SK-N-SH (cell line): ENCODE measurements at regions of chr2 and their contacts with region 1.

Region 1: DNA sequence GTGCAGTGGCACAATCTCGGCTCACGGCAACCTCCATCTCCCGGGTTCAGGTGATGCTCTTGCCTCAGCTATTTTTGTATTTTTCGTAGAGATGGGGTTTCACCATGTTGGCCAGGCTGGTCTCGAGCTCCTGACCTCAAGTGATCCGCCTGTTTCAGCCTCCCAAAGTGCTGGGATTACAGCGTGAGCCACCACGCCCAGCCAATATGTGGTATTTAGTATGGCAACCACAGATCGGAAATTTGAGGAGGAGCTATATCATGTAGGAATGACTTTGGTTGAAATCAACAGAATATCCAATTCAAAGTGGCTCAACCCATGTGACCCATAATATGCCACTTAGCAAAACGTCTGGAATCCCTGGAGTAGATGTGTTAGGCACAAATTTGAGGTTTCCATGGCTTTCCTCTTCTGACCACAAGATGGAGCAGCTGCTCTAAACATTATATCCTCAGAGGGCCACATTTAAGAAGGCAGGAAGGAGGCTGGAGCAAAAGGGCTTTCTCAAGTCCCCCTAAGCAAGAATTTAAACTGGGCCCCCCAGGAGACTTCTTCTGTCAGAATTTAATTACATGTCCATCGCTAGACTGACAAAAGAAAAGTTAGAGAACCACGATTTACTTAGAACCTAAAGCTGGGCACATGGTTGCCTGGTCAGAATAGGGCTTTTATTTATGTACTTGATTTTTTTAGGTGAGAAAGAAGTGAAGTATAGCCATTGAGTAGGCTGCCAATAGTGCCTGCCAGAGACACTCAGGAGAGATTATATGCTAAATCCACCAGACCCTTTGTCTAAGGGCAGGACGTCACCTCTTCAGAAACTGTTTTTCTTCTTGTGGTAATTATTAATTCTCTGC is 49.6 kb upstream of the ITSN2 start:
- DNase-seq: peak; percentile 83
- H3K4me3 ChIP-seq: no peak overlapping the region
- H3K27ac ChIP-seq: no peak overlapping the region
- H3K4me1 ChIP-seq: no peaks in the 10 kb centered on the region
- H3K27me3 ChIP-seq: no peaks in the 10 kb centered on the region
- CTCF ChIP-seq: peak; percentile 97
- EP300 ChIP-seq: no peak
- RAD21 ChIP-seq: peak; percentile 99

Region 2: DNA sequence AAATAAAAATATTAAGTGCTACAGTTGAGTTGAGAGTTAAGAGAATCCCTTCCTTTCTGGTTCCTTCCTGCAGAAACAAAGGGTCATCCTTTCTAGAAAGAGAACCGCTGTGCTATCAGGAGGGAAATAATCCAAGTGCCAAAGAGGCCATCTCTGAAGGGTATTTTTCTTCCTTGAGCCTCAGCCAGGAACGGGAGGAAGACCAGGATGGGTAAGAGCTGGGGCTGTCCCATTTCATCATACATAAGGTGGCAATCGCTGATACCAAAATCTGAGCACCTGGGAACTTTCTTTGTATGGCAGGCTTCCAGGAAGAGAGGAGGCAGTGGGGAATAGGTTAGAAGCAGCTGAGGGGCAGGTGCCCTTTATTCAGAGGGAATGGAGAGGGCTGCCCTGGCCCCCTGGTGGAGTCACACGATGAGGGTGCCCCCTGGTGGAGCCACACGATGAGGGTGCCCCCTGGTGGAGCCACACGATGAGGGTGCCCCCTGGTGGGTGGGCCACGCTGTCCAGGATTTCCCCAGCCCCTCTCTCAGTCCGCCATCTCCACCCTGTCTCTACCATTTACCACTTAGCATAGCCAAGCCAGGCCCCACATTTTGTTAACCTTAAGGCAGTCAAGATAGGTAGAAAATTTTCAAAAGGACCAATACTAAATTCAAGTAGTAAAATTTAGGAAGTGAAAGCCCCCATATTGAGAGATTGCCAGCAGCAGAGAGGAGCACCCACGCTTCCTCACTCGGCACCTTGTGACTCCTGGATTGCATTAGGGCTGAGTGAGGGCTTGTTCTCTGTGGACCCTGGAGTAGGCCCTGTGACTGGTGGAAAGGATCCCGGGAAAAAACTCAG is 245.6 kb before region 1 on chr2:
- CTCF ChIA-PET with region 1: no interaction called
- POLR2A ChIA-PET with region 1: no interaction called
- DNase-seq: peak; percentile 67
- H3K4me3 ChIP-seq: no peak overlapping the region
- H3K27ac ChIP-seq: no peak overlapping the region
- H3K4me1 ChIP-seq: no peaks in the 10 kb centered on the region
- H3K27me3 ChIP-seq: no peaks in the 10 kb centered on the region
- CTCF ChIP-seq: peak; percentile 61
- EP300 ChIP-seq: no peak
- RAD21 ChIP-seq: peak; percentile 50

Region 3: DNA sequence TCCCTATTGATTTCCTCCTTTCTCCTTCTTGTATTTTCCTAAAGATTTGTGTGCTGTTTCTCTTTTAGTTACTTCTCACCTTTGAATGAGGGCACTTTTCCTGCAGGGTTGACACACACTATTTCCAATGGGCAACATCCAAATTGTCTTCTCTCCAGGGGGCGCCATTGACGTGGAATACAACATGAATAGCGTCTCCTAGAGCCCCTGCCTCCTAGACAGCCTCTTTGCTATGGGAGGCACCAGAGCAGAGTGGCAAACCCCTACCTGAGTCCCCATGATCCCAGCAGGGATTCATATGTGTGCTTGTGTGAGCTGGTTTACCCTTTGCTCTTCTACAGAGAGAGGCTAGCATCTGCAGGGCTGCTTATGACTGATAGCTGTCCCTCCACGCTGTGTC is 11.7 kb after region 1 on chr2:
- CTCF ChIA-PET with region 1: interaction called, 68 read pairs
- POLR2A ChIA-PET with region 1: no interaction called
- DNase-seq: peak; percentile 60
- H3K4me3 ChIP-seq: no peak overlapping the region
- H3K27ac ChIP-seq: no peak overlapping the region
- H3K4me1 ChIP-seq: peaks cover 0 to 2% of the 10 kb centered on the region in 2 experiments; a peak in 1 of 4 replicates
- H3K27me3 ChIP-seq: no peaks in the 10 kb centered on the region
- CTCF ChIP-seq: peak; percentile 58
- EP300 ChIP-seq: no peak
- RAD21 ChIP-seq: peak; percentile 88

Region 4: GRCh38 chr2:24490674-24491625 is 81.0 kb after region 1 on chr2 and contains the start of gene NCOA1:
- CTCF ChIA-PET with region 1: interaction called, 12 read pairs
- POLR2A ChIA-PET with region 1: no interaction called
- DNase-seq: peak; percentile 97
- H3K4me3 ChIP-seq: peak within 1 kb of the TSS; percentile 73 to 94
- H3K27ac ChIP-seq: peak within 1 kb of the TSS; percentile 81 to 97
- H3K4me1 ChIP-seq: peaks cover 10 to 14% of the 10 kb centered on the region in 2 experiments; a peak in 3 of 4 replicates
- H3K27me3 ChIP-seq: no peaks in the 10 kb centered on the region
- CTCF ChIP-seq: no peak
- EP300 ChIP-seq: no peak; a peak in 1 of 4 replicates
- RAD21 ChIP-seq: no peak; the same call in 1 of the 2 replicates
- polyA plus RNA-seq, gene NCOA1: 10.7 and 13.1 TPM in 2 replicates

Region 5: GRCh38 chr2:24501813-24502212 is 91.9 kb after region 1 on chr2:
- CTCF ChIA-PET with region 1: no interaction called
- POLR2A ChIA-PET with region 1: no interaction called
- DNase-seq: no peak
- H3K4me3 ChIP-seq: no peak overlapping the region
- H3K27ac ChIP-seq: no peak overlapping the region
- H3K4me1 ChIP-seq: no peaks in the 10 kb centered on the region; a peak in 1 of 4 replicates
- H3K27me3 ChIP-seq: no peaks in the 10 kb centered on the region
- CTCF ChIP-seq: no peak
- EP300 ChIP-seq: no peak
- RAD21 ChIP-seq: no peak

Region 6: DNA sequence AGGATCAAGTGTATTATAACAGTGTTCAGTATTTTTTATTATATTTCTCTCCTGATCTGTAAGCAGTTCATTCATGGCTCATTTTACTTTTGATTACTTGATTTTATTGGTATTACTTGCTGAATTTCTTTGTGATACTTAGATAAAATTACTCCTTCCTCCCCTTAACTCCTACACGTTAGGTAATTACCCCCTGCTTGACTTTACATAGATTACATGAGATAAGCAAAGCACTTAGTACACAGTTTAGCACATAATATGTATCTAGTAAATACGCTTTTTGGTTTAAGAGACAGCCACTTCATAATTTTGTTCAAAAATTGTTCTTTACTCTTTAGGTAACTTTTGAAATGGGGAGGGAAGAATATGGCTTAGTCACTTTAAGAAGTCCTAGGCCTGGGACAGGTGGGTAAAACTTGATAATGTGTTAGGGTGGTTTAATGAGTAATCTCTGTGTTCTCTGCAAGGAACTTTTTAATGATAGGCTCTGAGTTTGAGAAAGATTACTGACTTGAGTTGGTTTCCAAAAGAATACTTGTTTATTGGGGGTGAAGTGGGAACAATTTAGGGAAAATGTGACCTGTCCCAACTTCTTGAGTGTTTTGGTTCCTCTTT is 162.0 kb after region 1 on chr2:
- CTCF ChIA-PET with region 1: no interaction called
- POLR2A ChIA-PET with region 1: no interaction called
- DNase-seq: no peak
- H3K4me3 ChIP-seq: no peak overlapping the region
- H3K27ac ChIP-seq: no peak overlapping the region
- H3K4me1 ChIP-seq: peaks cover 0 to 8% of the 10 kb centered on the region in 2 experiments; a peak in 2 of 4 replicates
- H3K27me3 ChIP-seq: no peaks in the 10 kb centered on the region
- CTCF ChIP-seq: no peak
- EP300 ChIP-seq: no peak
- RAD21 ChIP-seq: no peak

Region 7: DNA sequence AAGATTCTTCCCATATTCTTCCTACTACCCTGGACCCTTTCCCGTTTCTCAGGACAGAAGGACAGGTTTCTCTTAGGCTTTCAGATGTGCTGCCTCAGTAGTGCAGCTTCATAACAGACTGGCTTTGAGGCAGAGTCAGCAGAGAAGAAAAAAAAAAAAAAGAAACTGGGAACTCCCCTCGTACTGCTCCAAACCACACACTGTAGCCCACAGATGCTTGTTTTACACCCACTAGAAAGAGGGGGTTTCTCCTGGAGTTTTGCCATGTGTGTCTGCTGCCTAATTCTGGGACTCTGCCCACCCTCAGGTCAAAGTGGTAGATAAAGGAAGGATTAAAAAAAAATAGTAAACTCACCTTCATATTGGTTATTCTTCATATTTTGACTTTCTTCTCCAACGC is 177.0 kb after region 1 on chr2:
- CTCF ChIA-PET with region 1: no interaction called
- POLR2A ChIA-PET with region 1: no interaction called
- DNase-seq: no peak
- H3K4me3 ChIP-seq: no peak overlapping the region
- H3K27ac ChIP-seq: no peak overlapping the region
- H3K4me1 ChIP-seq: no peaks in the 10 kb centered on the region
- H3K27me3 ChIP-seq: no peaks in the 10 kb centered on the region
- CTCF ChIP-seq: no peak
- EP300 ChIP-seq: no peak
- RAD21 ChIP-seq: no peak

Region 8: GRCh38 chr2:24792874-24793760 is 383.2 kb after region 1 on chr2 and contains the starts of genes CENPO and PTRHD1:
- CTCF ChIA-PET with region 1: interaction called, 29 read pairs
- POLR2A ChIA-PET with region 1: no interaction called
- DNase-seq: peak; percentile 99
- H3K4me3 ChIP-seq: peak within 1 kb of the TSS; percentile 89 to 93
- H3K27ac ChIP-seq: peak within 1 kb of the TSS; percentile 94 to 100
- H3K4me1 ChIP-seq: peaks cover 18 to 19% of the 10 kb centered on the region in 2 experiments; a peak in 3 of 4 replicates
- H3K27me3 ChIP-seq: no peaks in the 10 kb centered on the region
- CTCF ChIP-seq: peak; percentile 70
- EP300 ChIP-seq: no peak; a peak in 2 of 4 replicates
- RAD21 ChIP-seq: peak; percentile 59
- polyA plus RNA-seq, gene CENPO: 18.3 and 22.5 TPM in 2 replicates
- polyA plus RNA-seq, gene PTRHD1: 65.6 and 74.4 TPM in 2 replicates

Region 9: DNA sequence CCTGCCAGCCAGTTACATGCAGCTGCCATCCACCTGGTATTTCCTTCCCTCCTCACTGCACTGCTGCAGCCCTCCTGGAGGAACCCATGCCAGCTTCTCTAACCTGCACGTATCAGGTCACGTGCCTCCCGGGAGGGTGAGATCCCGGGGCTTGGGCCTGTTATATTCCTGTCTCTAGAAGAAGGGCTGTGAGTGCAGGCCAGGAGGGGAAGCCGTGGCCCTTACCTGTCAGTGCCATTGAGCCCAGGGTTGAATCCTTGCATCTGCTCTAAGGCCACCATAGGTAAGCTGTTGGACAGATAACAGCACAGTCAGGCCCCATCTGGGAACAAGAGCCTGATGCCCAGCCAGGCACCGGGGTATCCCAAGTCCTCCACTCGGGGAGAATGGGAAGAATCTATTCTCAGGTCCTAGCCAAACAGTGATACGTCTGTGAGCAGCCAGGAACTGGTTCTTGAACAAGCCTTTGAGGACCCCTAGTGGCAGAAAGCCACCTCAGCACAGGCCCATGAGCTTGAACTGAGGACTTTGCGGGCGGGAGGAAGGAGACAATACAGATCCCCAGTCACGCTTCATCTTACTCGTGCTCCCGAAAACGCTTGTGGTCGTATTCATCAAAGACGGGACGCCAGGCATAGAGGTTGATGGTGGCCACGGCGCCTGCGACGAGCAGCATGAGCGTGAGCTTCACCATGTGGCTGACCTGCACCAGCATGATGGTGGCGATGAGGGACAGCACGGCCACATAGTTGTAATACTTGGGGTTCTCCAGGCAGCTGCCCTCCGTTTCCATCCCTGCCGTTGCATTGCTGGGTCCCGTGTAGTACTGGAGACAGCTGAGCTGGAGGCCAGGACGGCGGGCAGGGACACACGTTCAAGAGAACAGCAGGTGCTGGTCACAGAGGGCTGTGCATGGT is 417.7 kb after region 1 on chr2:
- CTCF ChIA-PET with region 1: interaction called, 269 read pairs
- POLR2A ChIA-PET with region 1: interaction called, 3 read pairs
- DNase-seq: peak; percentile 94
- H3K4me3 ChIP-seq: peak overlapping the region in 1 of 2 experiments; percentile 22; a peak in 1 of 4 replicates
- H3K27ac ChIP-seq: no peak overlapping the region
- H3K4me1 ChIP-seq: peaks cover 7 to 11% of the 10 kb centered on the region in 2 experiments; a peak in 1 of 4 replicates
- H3K27me3 ChIP-seq: no peaks in the 10 kb centered on the region
- CTCF ChIP-seq: peak; percentile 98
- EP300 ChIP-seq: no peak
- RAD21 ChIP-seq: peak; percentile 99